Activated CD8-positive, alpha-beta T cell treated with anti-CD3 and anti-CD28 coated beads, Interleukin-2, amount 10 ng/mL, durations not matched to agents 7 days and 5 days (primary cell): ENCODE measurements at regions of chr14 and their contacts with region 1.

Region 1: GRCh38 chr14:68843471-68844209 is 50.8 kb upstream of the ZFP36L1 start:
- DNase-seq: peak; percentile 83
- ATAC-seq: peak; percentile 81
- H3K4me3 Mint-ChIP-seq: no peak overlapping the region
- H3K27ac Mint-ChIP-seq: no peak overlapping the region
- H3K4me1 Mint-ChIP-seq: peaks cover 19% of the 10 kb centered on the region
- H3K27me3 Mint-ChIP-seq: no peaks in the 10 kb centered on the region

Region 2: DNA sequence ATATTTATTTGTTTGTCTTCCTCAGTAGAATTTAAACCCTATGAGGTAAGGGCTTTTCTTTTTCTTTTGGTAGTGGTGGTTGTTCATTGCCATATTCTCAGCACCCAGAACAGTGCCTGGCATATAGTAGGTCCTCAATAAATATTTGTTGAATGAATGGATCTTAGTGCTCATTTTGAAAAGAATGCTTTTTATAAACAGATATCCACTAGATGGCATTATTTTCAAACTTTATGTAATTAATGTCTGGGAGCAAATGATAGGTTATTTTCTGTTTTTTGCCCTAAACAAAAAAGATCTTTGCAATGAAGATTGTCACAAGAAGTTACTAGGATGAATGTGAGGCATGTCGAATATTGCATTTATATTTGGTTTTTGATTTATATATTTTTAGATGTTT is 959.9 kb before region 1 on chr14:
- CTCF ChIA-PET with region 1: interaction called, 19 read pairs
- POLR2A ChIA-PET with region 1: no interaction called
- DNase-seq: no peak
- ATAC-seq: no peak
- H3K4me3 Mint-ChIP-seq: no peak overlapping the region
- H3K27ac Mint-ChIP-seq: no peak overlapping the region
- H3K4me1 Mint-ChIP-seq: peaks cover 22% of the 10 kb centered on the region
- H3K27me3 Mint-ChIP-seq: no peaks in the 10 kb centered on the region

Region 3: DNA sequence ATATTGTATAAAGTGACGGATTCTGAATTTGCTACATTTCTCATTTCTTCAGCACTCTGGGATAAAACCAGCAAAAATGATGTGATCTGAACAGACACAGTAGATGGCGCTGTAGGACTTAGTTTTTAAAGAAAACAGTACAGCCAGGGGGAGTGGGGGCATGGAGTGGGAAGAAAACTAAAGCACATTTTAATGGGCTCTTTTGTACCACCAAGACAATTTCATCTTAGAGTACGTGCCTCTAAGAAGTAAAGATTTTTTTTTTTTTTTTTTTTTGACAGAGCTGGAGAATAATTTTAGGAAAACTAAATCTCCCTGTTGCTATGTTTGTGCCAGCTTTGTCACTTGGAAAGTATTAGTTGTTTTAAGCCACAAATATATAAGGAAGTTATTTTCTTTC is 899.7 kb before region 1 on chr14:
- CTCF ChIA-PET with region 1: interaction called, 12 read pairs
- POLR2A ChIA-PET with region 1: no interaction called
- DNase-seq: peak; percentile 68
- ATAC-seq: peak; percentile 42
- H3K4me3 Mint-ChIP-seq: no peak overlapping the region
- H3K27ac Mint-ChIP-seq: no peak overlapping the region
- H3K4me1 Mint-ChIP-seq: no peaks in the 10 kb centered on the region
- H3K27me3 Mint-ChIP-seq: peaks cover 7% of the 10 kb centered on the region

Region 4: GRCh38 chr14:68795597-68796417 is 47.8 kb before region 1 on chr14:
- CTCF ChIA-PET with region 1: interaction called, 20 read pairs
- POLR2A ChIA-PET with region 1: interaction called, 3 read pairs
- DNase-seq: peak; percentile 86
- ATAC-seq: peak; percentile 50
- H3K4me3 Mint-ChIP-seq: peak overlapping the region; percentile 87
- H3K27ac Mint-ChIP-seq: peak overlapping the region; percentile 100
- H3K4me1 Mint-ChIP-seq: peaks cover 41% of the 10 kb centered on the region
- H3K27me3 Mint-ChIP-seq: no peaks in the 10 kb centered on the region

Region 5: GRCh38 chr14:68824517-68825347 is 18.9 kb before region 1 on chr14:
- CTCF ChIA-PET with region 1: interaction called, 107 read pairs
- POLR2A ChIA-PET with region 1: no interaction called
- DNase-seq: no peak
- ATAC-seq: no peak
- H3K4me3 Mint-ChIP-seq: no peak overlapping the region
- H3K27ac Mint-ChIP-seq: peak overlapping the region; percentile 25
- H3K4me1 Mint-ChIP-seq: peaks cover 35% of the 10 kb centered on the region
- H3K27me3 Mint-ChIP-seq: no peaks in the 10 kb centered on the region

Region 6: DNA sequence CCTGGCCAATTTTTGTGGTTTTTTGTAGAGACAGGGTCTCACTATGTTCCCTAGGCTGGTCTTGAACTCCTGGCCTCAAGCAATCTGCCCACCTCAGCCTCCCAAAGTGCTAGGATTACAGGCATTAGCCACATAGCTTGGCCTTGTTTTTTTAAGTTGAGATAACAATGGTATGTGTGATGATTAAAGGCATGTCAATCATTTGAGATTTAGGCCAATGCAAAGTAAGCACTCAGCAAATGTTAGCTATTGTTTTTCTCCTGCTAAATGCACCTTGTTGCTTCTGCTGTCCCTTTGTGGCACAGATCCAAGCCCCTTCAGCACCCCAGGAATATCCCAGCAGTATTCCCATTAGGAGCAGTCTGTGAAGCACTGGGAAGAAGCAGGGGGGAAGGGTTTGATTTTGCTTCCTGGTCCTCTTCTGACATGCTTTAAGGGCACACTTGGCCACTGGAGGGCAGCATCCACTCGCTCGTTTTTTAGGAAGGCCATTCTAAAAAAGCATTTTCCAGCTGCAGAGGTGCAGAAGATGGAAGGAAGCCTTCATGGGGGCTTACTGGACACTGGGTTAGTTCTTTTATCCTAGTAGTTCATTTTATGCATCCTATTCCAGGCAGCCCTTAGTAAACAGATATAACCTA is 19.4 kb after region 1 on chr14:
- CTCF ChIA-PET with region 1: interaction called, 19 read pairs
- POLR2A ChIA-PET with region 1: no interaction called
- DNase-seq: peak; percentile 84
- ATAC-seq: peak; percentile 67
- H3K4me3 Mint-ChIP-seq: no peak overlapping the region
- H3K27ac Mint-ChIP-seq: no peak overlapping the region
- H3K4me1 Mint-ChIP-seq: peaks cover 2% of the 10 kb centered on the region
- H3K27me3 Mint-ChIP-seq: no peaks in the 10 kb centered on the region

Region 7: GRCh38 chr14:69073915-69074314 is 230.3 kb after region 1 on chr14:
- CTCF ChIA-PET with region 1: no interaction called
- POLR2A ChIA-PET with region 1: no interaction called
- DNase-seq: no peak
- ATAC-seq: no peak
- H3K4me3 Mint-ChIP-seq: no peak overlapping the region
- H3K27ac Mint-ChIP-seq: no peak overlapping the region
- H3K4me1 Mint-ChIP-seq: no peaks in the 10 kb centered on the region
- H3K27me3 Mint-ChIP-seq: no peaks in the 10 kb centered on the region